HepG2 (cell line): ENCODE measurements at regions of chr1 and their contacts with region 1.

Region 1: DNA sequence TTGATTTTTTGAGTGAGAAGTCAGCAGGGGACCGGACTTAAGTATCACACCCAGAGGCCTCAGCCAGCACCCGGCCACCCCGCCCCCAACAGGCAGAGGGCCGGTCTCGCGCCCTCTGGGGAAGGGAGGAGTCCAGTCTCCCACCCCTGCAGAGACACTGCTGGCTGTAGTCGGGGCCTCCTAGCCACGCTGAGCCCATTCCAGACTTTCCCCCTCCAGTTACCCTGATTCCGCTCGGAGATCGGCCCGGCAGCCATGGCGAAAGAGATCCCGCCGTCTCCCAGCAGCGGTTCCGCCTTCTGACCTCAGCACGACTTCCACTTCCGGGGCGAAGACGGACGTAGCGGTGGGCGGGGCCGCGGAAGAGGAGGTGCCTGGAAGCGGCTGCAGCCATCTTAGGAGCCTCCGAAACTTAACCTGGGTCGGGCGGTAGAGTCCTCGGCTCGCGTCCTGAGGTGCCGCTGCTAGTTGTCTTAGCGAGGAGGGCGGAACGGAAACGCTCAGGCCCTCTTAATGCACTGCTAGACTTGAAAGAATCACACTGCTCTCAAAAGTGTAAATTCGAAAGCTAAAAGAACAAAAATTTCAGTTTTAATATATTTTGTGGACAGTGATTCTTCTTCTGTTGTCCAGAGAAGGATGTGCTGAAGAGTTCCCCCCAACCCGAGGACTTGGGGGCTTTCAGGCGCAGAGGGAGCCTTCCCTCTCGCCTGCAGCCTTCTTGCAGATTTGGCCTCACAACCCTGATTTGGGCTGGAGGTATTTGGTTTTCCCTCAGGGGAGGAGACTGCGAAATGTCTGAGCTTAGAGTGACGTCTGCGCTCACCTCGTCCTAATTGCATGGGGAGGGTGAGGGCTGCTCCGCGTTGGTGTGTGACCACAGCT is at the start of gene SF3B4:
- DNase-seq: peak; percentile 87
- ATAC-seq: peak; percentile 99
- H3K4me3 ChIP-seq: peak within 1 kb of the TSS; percentile 90 to 99 (median 92)
- H3K27ac ChIP-seq: peak within 1 kb of the TSS; percentile 88
- H3K4me1 ChIP-seq: peaks cover 30% of the 10 kb centered on the region
- H3K27me3 ChIP-seq: no peaks in the 10 kb centered on the region; a peak in 1 of 5 replicates
- CTCF ChIP-seq: 0 out of 2 replicates have a peak, but pooled peaks have one; percentile 18
- EP300 ChIP-seq: 0 out of 4 replicates have a peak, but pooled peaks of 1 of the 2 experiments have one; percentile 16
- POLR2A ChIP-seq: peak; percentile 94 to 95
- RAD21 ChIP-seq: 0 out of 2 replicates have a peak, but pooled peaks have one; percentile 14
- total RNA-seq, gene SF3B4: 14.8 and 24.6 TPM in 2 replicates

Region 2: GRCh38 chr1:149899460-149900293 is 28.1 kb before region 1 on chr1 and contains the start of gene BOLA1:
- CTCF ChIA-PET with region 1: no interaction called
- POLR2A ChIA-PET with region 1: no interaction called
- in situ Hi-C with region 1: no loop called
- intact Hi-C with region 1: loop called (anchors 1 kb)
- DNase-seq: peak; percentile 78
- ATAC-seq: peak; percentile 99
- H3K4me3 ChIP-seq: peak within 1 kb of the TSS; percentile 3 to 62 (median 42); a peak in 4 of 6 replicates
- H3K27ac ChIP-seq: peak within 1 kb of the TSS; percentile 55
- H3K4me1 ChIP-seq: peaks cover 16% of the 10 kb centered on the region
- H3K27me3 ChIP-seq: no peaks in the 10 kb centered on the region
- CTCF ChIP-seq: no peak
- EP300 ChIP-seq: no peak
- POLR2A ChIP-seq: peak; percentile 59 to 83
- RAD21 ChIP-seq: no peak
- total RNA-seq, gene BOLA1: 3.1 and 4.2 TPM in 2 replicates

Region 3: GRCh38 chr1:149942207-149942606 is 14.5 kb after region 1 on chr1:
- CTCF ChIA-PET with region 1: no interaction called
- POLR2A ChIA-PET with region 1: interaction called, 18 read pairs
- in situ Hi-C with region 1: no loop called
- intact Hi-C with region 1: no loop called
- DNase-seq: peak; percentile 56
- ATAC-seq: peak; percentile 80
- H3K4me3 ChIP-seq: no peak overlapping the region
- H3K27ac ChIP-seq: no peak overlapping the region
- H3K4me1 ChIP-seq: peaks cover 33% of the 10 kb centered on the region
- H3K27me3 ChIP-seq: no peaks in the 10 kb centered on the region
- CTCF ChIP-seq: peak; percentile 64
- EP300 ChIP-seq: no peak
- POLR2A ChIP-seq: no peak
- RAD21 ChIP-seq: peak; percentile 22; the same call in 1 of the 2 replicates

Region 4: GRCh38 chr1:149986486-149987294 is 58.9 kb after region 1 on chr1:
- CTCF ChIA-PET with region 1: no interaction called
- POLR2A ChIA-PET with region 1: no interaction called
- in situ Hi-C with region 1: no loop called
- intact Hi-C with region 1: no loop called
- DNase-seq: no peak
- ATAC-seq: no peak
- H3K4me3 ChIP-seq: no peak overlapping the region
- H3K27ac ChIP-seq: no peak overlapping the region
- H3K4me1 ChIP-seq: peaks cover 15% of the 10 kb centered on the region
- H3K27me3 ChIP-seq: no peaks in the 10 kb centered on the region; a peak in 1 of 5 replicates
- CTCF ChIP-seq: no peak
- EP300 ChIP-seq: no peak
- POLR2A ChIP-seq: no peak
- RAD21 ChIP-seq: no peak